ENCODE measurements at regions of chr6 and their contacts with region 1.

Region 1: DNA sequence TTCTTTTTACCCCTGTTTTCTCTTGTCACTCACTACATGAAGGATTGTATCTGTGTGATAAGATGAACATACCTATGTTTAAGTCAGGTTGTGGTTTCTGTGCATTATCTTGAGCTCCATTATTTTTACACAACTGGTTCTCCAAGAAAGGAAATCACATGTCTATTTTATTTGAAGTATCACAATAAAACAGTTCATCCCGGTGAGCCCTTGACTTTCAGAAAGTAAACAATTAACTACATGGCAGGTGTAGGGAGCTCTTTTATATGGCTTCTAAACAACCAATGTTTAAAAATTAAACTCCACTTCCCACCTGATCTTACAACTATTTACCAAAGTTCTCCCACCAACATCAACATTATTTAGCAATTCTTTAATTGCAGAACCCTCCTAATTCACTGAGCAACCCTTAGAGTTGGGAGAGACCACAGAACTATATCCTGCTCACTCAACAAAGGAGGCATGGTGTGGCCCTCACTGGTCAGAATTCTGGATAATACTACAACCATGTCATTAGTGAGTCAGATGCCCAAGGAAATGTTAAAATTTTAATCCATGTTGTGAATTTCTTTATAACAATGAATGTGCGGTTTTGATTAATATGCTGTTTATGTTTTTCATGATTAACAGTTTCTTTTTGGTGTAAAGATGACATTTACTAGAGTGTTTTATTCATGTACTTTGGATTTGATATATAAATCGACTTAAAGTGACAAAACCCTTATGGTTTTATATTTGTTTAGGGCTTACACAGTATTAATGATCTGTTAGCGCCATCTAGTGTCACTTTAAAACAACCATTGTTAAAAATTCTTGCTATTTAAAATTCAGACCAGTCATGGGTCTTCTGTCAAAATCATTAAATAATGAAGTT is 50.0 kb upstream of the SCGN start:
- DNase-seq: peak; percentile 16 to 51 (median 31)
- H3K4me3 ChIP-seq: no peak overlapping the region
- H3K4me3 Mint-ChIP-seq: no peak overlapping the region
- H3K27ac ChIP-seq: no peak overlapping the region
- H3K27ac Mint-ChIP-seq: no peak overlapping the region
- H3K4me1 ChIP-seq: no peaks in the 10 kb centered on the region
- H3K4me1 Mint-ChIP-seq: no peaks in the 10 kb centered on the region
- H3K27me3 ChIP-seq: no peaks in the 10 kb centered on the region
- H3K27me3 Mint-ChIP-seq: peaks cover 0 to 3% (median 0%) of the 10 kb centered on the region in 3 donors
- CTCF ChIP-seq: peak; percentile 80

Region 2: DNA sequence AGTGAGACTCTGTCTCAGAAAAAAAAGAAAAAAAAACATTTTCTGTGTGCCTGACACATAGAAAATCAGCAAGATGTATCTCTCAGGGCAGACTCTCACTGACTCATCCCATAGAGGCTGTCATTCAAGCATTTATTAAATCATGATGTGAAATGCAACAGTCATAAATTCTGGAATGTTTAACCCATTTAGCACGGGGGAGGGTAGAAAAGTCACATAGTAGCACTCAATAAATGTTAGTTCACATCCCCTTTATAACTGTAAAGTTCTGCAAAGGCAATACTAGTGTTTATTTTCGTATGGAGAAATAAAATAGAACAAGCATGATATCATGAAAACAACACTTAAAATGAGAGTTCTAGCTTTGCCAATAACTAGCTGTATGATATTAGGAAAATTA is 338.4 kb before region 1 on chr6:
- intact Hi-C with region 1: loop called in 1 of 2 experiments (anchors 10 kb)
- DNase-seq: no peak
- H3K4me3 ChIP-seq: no peak overlapping the region
- H3K4me3 Mint-ChIP-seq: no peak overlapping the region
- H3K27ac ChIP-seq: no peak overlapping the region
- H3K27ac Mint-ChIP-seq: no peak overlapping the region
- H3K4me1 ChIP-seq: peaks cover 0 to 9% of the 10 kb centered on the region in 2 donors
- H3K4me1 Mint-ChIP-seq: peaks cover 1% of the 10 kb centered on the region
- H3K27me3 ChIP-seq: no peaks in the 10 kb centered on the region
- H3K27me3 Mint-ChIP-seq: peaks cover 0 to 2% (median 2%) of the 10 kb centered on the region in 3 donors
- CTCF ChIP-seq: no peak